ENCODE measurements at regions of chr17 and their contacts with region 1.

Region 1: DNA sequence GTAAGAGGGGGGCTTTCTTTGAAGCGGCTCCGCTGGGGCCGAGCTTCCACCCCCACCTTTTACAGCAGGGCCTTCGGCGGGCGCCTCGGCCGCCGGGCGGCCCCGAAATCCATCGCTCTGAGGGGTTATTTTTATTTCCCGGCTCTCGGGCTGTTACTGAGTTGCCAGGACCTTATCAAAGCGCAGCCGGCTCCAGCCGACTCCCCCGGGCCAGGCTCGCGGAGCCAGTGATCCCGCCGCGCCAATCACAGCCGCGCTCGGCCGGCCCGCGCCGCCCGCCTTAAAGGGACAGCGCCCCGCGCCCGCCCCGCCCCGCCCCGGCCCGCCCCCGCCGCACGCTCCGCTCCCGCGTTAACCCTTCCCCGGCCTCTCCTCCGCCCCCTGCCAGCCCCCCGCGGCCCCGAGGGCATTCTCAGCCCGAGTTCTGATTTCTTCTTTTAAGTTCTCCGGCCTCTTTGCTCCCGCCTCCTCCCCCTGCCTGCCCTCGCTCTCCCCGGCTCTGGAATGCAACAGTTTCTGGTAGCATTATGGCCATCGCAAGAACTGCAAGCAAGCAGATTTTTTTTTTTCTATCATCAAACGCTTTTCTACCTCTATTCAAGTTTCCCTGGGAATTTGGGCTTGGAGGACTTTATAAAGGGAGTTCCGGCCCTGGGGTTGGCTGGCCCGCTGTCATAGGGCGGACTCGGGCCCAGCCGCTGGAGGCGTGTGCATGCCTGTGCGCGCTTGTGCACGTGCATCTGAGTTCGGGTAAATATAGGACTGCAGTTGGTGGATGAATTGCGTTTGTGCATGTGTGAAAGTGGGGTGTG is at the start of gene AXIN2:
- DNase-seq: peak; percentile 70 to 91 (median 88)
- ATAC-seq: peak; percentile 91
- H3K4me3 ChIP-seq: peak within 1 kb of the TSS; percentile 70
- H3K4me3 Mint-ChIP-seq: peak within 1 kb of the TSS in 8 of 10 donors; percentile 79 to 94 (median 87)
- H3K27ac ChIP-seq: peak within 1 kb of the TSS; percentile 92
- H3K27ac Mint-ChIP-seq: peak within 1 kb of the TSS; percentile 70 to 93 (median 90)
- H3K4me1 ChIP-seq: peaks cover 18 to 24% of the 10 kb centered on the region in 2 donors
- H3K4me1 Mint-ChIP-seq: peaks cover 10 to 37% (median 31%) of the 10 kb centered on the region in 7 donors
- H3K27me3 ChIP-seq: no peaks in the 10 kb centered on the region
- H3K27me3 Mint-ChIP-seq: peaks cover 0 to 22% (median 0%) of the 10 kb centered on the region in 5 donors
- total RNA-seq, gene AXIN2: 7.4 to 63.4 (median 39.5) TPM

Region 2: GRCh38 chr17:65514082-65514481 is 47.5 kb before region 1 on chr17:
- CTCF ChIA-PET with region 1: no interaction called
- POLR2A ChIA-PET with region 1: no interaction called
- intact Hi-C with region 1: no loop called
- DNase-seq: no peak
- ATAC-seq: no peak
- H3K4me3 ChIP-seq: no peak overlapping the region
- H3K4me3 Mint-ChIP-seq: no peak overlapping the region
- H3K27ac ChIP-seq: no peak overlapping the region
- H3K27ac Mint-ChIP-seq: no peak overlapping the region
- H3K4me1 ChIP-seq: no peaks in the 10 kb centered on the region
- H3K4me1 Mint-ChIP-seq: peaks cover 0 to 8% (median 6%) of the 10 kb centered on the region in 7 donors
- H3K27me3 ChIP-seq: no peaks in the 10 kb centered on the region
- H3K27me3 Mint-ChIP-seq: peaks cover 0 to 54% (median 3%) of the 10 kb centered on the region in 5 donors

Region 3: DNA sequence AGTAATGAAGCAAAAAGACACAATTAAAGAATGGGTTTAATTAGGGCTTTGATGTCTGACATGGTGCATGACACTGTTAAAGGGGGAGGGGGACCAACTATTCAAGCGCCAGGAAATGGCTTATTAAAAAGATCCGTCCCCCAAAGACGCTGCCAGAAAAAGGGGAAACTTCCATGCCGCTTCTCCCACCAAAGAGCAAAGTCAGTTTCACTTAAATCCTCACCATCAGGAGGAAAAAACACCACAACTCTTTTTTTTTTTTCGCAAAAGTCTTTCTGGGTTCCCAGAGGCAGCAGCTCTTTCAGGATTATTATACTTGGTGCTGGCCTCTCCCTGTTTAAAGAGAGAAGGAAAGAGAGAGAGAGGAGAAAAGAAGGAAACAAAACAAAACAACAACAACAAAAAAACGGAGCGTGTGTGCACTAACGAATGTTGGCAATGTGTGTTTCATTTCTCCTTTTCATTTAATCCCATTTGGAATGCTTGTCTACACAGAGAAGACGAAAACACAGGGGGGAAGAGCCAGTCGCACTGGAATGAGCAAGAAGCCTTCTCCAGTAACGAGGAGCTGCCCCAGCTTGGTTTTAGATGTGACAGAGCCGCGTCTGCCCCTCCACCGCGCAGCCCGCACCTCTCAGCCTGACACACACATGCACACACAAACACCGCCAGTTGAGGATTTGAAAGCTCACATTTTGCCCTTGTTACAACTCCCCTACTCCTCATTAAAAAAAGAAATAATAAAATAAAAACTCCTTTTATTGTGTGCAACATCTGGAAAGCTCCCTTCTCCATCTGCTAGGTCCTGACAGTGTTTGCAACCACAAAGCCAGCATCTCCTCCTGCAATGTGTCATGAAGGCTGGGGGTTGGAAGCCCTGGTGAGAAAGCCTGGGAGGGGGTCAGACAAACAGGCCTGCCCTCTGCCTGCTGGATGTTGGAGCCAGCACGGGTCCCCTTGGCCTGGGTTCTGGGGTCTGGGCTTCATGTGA is 32.5 kb after region 1 on chr17:
- CTCF ChIA-PET with region 1: no interaction called
- POLR2A ChIA-PET with region 1: interaction called, 10 read pairs
- intact Hi-C with region 1: loop called in 1 of 2 experiments (anchors 2 kb)
- DNase-seq: peak in 3 of 9 donors; percentile 19 to 26 (median 23)
- ATAC-seq: peak; percentile 44
- H3K4me3 ChIP-seq: peak overlapping the region; percentile 27
- H3K4me3 Mint-ChIP-seq: peak overlapping the region; percentile 78 to 91 (median 86)
- H3K27ac ChIP-seq: no peak overlapping the region
- H3K27ac Mint-ChIP-seq: peak overlapping the region in 7 of 9 donors; percentile 25 to 76 (median 57)
- H3K4me1 ChIP-seq: peaks cover 0 to 22% of the 10 kb centered on the region in 2 donors
- H3K4me1 Mint-ChIP-seq: peaks cover 12 to 51% (median 30%) of the 10 kb centered on the region in 7 donors
- H3K27me3 ChIP-seq: no peaks in the 10 kb centered on the region
- H3K27me3 Mint-ChIP-seq: peaks cover 0 to 10% (median 0%) of the 10 kb centered on the region in 5 donors

Region 4: DNA sequence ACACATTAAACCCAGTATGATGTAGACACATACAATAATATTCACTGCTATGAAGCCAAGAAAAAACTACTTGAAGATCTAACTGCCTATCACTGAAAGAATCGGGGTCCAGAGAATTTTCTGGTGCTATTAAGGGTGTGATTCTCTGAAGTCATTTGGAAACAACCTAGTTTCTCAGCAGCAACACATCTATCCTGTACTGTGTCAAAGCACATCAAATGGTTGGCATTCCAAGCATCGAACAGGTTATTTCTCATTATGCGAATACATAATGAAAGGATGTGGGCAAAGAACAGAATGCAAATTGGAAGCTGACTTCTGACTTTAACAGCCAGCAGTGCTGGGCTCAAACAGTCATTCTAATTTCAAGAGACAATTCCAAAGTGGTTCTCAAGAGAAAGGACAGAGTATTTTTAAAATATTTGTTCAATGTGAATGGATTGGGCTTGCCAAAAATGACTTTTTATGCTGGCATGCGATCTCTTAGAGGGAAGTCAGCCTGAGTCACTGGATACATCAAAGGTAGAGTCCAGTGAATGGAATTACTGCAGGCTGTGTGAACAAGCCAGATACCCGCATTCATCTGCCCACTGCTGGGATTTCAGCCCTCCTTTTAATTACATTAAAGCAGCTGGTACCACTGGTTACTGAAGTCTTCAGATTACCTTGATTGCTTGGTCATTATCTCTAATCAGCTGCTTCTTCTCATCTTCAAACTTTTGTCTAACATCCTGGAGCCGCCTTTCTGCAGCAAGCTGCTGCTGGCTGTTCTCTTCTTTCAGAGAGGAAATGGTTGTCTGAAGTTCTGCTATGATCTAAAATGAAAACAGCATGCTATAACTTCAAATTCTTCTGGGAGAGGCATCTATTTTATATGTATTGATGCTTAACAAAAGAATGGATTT is 181.1 kb after region 1 on chr17:
- CTCF ChIA-PET with region 1: interaction called, 3 read pairs
- POLR2A ChIA-PET with region 1: interaction called, 7 read pairs
- intact Hi-C with region 1: loop called in 1 of 2 experiments (anchors 2 kb)
- DNase-seq: peak in 5 of 9 donors; percentile 21 to 37 (median 30)
- ATAC-seq: no peak
- H3K4me3 ChIP-seq: no peak overlapping the region
- H3K4me3 Mint-ChIP-seq: peak overlapping the region in 8 of 10 donors; percentile 57 to 81 (median 69)
- H3K27ac ChIP-seq: no peak overlapping the region
- H3K27ac Mint-ChIP-seq: peak overlapping the region in 8 of 9 donors; percentile 3 to 81 (median 54)
- H3K4me1 ChIP-seq: peaks cover 0 to 24% of the 10 kb centered on the region in 2 donors
- H3K4me1 Mint-ChIP-seq: peaks cover 8 to 33% (median 26%) of the 10 kb centered on the region in 7 donors
- H3K27me3 ChIP-seq: no peaks in the 10 kb centered on the region
- H3K27me3 Mint-ChIP-seq: peaks cover 0 to 3% (median 0%) of the 10 kb centered on the region in 5 donors

Measured in naive thymus-derived CD4-positive, alpha-beta T cell (primary cell).